ENCODE measurements at regions of chr17 and their contacts with region 1.

Region 1: DNA sequence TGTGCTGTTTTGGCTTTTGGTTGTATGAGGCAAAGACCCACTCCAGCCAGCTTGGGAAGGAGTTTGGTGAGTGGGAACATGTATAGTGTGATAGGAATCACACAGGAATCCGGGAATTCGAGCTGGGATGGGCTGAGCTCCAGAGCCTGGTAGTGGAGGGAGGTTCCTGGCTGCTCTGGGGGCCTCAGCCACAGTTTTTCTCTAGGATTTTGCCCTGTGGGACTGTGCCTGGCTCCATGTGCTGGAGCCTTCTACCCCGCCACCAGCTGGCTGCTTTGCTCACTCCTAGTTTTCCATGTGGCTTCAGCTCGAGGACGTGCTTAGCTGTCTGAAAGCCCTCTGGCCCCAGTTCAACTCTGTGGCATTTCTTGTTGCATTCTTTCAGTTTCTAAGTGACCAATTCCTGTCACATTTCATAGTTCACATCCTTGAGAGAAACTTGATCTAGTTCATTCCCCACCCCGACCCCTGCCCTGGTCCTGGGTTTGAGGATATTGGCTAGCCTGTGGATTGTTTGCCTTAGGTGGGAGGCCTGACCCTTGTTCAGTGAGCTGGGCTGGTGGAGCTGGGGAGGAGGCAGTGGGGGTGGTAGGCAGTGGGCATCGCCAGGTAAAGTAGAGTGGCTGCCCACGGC is 5.0 kb downstream of the SEC14L1 start:
- DNase-seq: peak; percentile 77

Region 2: DNA sequence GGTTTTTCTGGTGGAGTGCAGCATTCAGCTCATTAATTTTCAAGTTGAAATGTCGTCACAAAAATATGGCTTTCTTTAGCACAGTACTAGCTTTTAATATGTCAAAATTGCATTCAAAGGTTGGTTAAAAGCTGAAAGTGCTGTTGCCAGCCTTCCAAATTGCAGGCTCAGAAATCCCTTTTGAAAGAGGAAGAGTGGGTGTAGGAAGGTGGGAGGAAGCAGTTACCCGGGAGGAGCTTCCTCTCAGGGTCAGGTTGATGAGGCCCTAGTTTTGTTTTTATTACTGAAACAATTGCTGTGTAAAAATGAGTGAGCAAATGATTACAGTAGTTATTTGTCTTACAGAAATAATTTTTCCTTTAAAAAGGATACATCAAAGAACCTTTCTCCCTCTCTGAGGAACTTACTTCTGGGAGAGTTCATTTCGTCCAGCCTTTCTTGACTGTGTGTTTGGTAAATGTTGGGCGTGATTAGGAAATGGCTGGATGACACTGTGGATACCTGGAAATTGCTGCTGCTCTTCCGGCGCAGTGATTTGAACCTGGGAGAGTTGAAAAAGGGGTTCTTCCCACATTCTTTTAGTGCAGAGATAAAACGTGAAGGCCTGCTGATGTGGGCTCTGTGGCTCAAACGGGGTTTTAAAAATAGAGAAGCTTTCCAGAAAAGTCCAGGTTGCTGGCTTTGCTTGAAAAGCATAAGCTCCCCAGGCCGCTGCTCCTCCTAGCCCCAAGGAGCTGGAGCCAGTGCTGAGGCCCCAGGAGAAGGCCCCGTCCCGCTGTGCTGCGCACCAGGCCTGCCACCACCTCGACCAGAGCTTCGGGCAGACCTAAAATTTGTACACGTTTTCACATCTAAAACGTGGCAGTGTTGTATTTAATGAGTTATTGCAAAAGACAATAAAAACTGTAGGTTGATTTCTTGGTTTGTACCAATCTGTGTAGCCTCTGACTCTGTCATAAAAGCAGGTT is 36.8 kb after region 1 on chr17:
- intact Hi-C with region 1: loop called (anchors 5 kb)
- DNase-seq: no peak

Region 3: GRCh38 chr17:77214743-77215142 is 69.0 kb after region 1 on chr17:
- intact Hi-C with region 1: loop called (anchors 5 kb)
- DNase-seq: no peak

Region 4: DNA sequence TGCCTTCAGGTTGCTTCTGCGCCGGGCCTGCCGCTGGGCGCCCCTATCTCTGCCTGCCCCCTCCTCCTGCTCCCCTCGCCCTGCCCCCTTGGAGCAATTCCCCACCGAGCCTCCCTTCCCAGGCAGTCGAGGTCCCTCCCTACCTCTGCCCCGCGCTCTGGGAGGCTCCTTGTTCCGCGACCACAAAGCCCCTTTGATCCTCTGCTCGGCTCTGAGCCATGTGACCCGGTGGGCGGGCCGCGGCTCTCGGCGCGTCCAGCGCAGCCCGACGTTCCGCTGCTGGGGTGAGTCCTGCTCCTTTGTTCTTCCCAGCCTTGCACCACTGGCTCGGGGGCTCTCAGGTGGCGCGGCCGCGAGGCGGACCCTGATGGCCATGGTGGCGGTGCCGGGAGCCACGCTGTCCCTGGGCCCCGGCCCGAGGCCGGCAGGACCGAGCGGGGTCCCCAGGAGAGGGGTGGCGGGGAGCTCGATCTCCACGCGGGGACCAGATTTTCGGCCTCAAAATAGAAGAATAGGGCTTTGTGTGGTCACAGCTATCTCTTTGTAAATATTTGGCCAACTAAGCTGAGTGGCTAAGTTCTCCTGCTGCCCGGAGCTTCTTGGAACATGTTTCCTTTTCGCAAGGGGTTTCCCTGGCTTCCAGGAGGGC is 305.6 kb after region 1 on chr17:
- intact Hi-C with region 1: no loop called
- DNase-seq: peak; percentile 88

Measured in cardiac septum (tissue), 1 donor.